ENCODE measurements at regions of chr9 and their contacts with region 1.

Region 1: DNA sequence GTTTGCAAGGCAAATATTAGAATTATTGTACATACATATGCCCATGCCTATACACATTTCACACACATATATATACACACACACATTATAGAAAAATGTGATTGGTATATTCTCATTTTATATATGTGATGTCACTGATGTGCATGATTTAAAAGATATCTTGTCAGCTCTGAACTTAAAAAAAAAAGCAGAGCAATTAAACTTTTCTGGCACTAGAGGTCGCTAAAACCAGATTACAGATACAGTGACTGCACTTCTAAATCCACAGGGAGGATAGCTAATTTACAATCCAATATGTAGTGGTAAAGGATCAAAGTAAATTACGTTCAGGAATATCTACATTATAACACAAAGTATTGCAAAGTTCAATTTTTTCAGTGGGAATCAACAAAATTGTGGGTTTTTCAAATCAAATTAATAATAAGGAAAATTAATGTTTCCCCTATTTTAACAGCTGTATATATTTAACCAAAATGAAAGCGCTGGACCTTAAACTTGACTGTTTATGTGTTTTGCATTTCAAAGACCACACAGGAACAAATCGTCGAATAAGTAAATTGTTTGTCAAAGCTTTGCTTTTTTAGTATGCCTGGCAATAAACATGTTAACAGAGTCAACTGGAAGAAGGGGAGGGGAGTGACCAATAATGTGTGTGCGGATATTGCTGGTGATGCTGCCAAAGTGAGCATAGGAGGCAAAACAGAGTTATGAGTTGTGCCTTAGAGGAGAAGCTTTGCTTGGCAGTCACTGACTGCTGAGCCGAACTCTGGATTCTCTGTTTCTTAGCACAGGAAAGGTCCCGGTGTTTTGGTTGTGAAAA is 1201.3 kb upstream of the C9orf72 start:
- DNase-seq: peak; percentile 29
- H3K27ac ChIP-seq: no peak overlapping the region
- CTCF ChIP-seq: peak; percentile 88

Region 2: GRCh38 chr9:28764532-28764931 is 10.1 kb before region 1 on chr9:
- CTCF ChIA-PET with region 1: interaction called, 12 read pairs
- POLR2A ChIA-PET with region 1: no interaction called
- DNase-seq: no peak
- H3K27ac ChIP-seq: no peak overlapping the region
- CTCF ChIP-seq: no peak

Region 3: GRCh38 chr9:28839778-28840430 is 65.3 kb after region 1 on chr9:
- CTCF ChIA-PET with region 1: interaction called, 10 read pairs
- POLR2A ChIA-PET with region 1: no interaction called
- DNase-seq: no peak
- H3K27ac ChIP-seq: no peak overlapping the region
- CTCF ChIP-seq: no peak

Region 4: GRCh38 chr9:28999810-29000209 is 225.2 kb after region 1 on chr9:
- CTCF ChIA-PET with region 1: no interaction called
- POLR2A ChIA-PET with region 1: no interaction called
- DNase-seq: peak; percentile 2
- H3K27ac ChIP-seq: no peak overlapping the region
- CTCF ChIP-seq: no peak

Measured in RWPE1 (cell line).